ENCODE measurements at regions of chr17 and their contacts with region 1.

Region 1: GRCh38 chr17:2416010-2416734 is 15.3 kb upstream of the MNT start:
- DNase-seq: no peak
- ATAC-seq: peak; percentile 88
- H3K4me3 ChIP-seq: no peak overlapping the region
- H3K27ac ChIP-seq: 0 out of 2 replicates have a peak overlapping the region, but pooled peaks have one; percentile 6
- H3K4me1 ChIP-seq: peaks cover 0 to 13% of the 10 kb centered on the region in 2 experiments; a peak in 2 of 4 replicates
- H3K27me3 ChIP-seq: no peaks in the 10 kb centered on the region
- CTCF ChIP-seq: peak; percentile 89 to 97 (median 89)
- POLR2A ChIP-seq: no peak
- RAD21 ChIP-seq: peak; percentile 95

Region 2: GRCh38 chr17:2323629-2324314 is 92.4 kb before region 1 on chr17:
- CTCF ChIA-PET with region 1: no interaction called
- POLR2A ChIA-PET with region 1: no interaction called
- RAD21 ChIA-PET with region 1: no interaction called
- intact Hi-C with region 1: no loop called
- DNase-seq: no peak
- ATAC-seq: no peak
- H3K4me3 ChIP-seq: no peak overlapping the region
- H3K27ac ChIP-seq: no peak overlapping the region
- H3K4me1 ChIP-seq: no peaks in the 10 kb centered on the region
- H3K27me3 ChIP-seq: no peaks in the 10 kb centered on the region
- CTCF ChIP-seq: no peak
- POLR2A ChIP-seq: no peak
- RAD21 ChIP-seq: no peak

Region 3: GRCh38 chr17:2369551-2370210 is 46.5 kb before region 1 on chr17:
- CTCF ChIA-PET with region 1: interaction called, 12 read pairs
- POLR2A ChIA-PET with region 1: no interaction called
- RAD21 ChIA-PET with region 1: no interaction called
- intact Hi-C with region 1: no loop called
- DNase-seq: no peak
- ATAC-seq: peak; percentile 51
- H3K4me3 ChIP-seq: no peak overlapping the region
- H3K27ac ChIP-seq: no peak overlapping the region
- H3K4me1 ChIP-seq: no peaks in the 10 kb centered on the region
- H3K27me3 ChIP-seq: no peaks in the 10 kb centered on the region
- CTCF ChIP-seq: no peak; a peak in 1 of 6 replicates
- POLR2A ChIP-seq: no peak
- RAD21 ChIP-seq: no peak

Region 4: DNA sequence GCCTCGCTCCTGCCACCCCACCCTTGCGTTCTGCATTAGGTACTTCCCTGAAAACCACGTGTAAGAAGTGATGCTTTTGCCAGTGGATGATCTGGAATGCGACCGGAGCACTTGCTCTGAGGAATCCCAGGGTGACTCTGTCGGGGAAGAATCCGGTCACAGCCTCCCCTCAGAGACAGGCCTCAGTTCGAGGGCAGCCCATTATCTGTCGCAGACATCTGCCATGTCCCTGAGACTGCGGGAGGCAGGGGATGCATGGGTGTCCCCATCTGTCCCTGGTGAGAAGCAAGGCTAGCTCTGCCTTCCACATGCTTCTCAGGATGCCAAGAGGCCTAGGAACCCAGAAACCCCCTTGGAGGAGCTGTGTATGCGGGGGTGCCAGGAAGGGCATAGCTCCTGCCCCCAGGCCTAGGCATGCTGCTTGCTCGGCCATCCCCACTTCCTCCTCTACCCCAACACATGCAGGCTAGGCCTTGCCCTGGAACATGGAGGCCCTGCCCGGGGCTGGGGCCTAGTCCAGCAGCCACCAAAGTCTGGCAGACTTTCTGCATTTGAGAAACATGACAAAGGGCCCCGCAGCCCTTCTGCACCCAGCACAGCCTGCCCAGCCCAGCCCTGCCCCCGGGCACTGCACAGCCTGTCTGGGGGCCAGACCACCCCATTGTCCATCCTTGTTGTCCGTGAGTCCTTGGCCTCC is 35.8 kb before region 1 on chr17:
- CTCF ChIA-PET with region 1: interaction called, 351 read pairs
- POLR2A ChIA-PET with region 1: interaction called, 18 read pairs
- RAD21 ChIA-PET with region 1: interaction called, 33 to 40 read pairs
- intact Hi-C with region 1: loop called (anchors 1 kb)
- DNase-seq: no peak
- ATAC-seq: no peak
- H3K4me3 ChIP-seq: no peak overlapping the region
- H3K27ac ChIP-seq: no peak overlapping the region
- H3K4me1 ChIP-seq: peaks cover 0 to 8% of the 10 kb centered on the region in 2 experiments; a peak in 1 of 4 replicates
- H3K27me3 ChIP-seq: no peaks in the 10 kb centered on the region
- CTCF ChIP-seq: no peak
- POLR2A ChIP-seq: no peak
- RAD21 ChIP-seq: no peak

Region 5: DNA sequence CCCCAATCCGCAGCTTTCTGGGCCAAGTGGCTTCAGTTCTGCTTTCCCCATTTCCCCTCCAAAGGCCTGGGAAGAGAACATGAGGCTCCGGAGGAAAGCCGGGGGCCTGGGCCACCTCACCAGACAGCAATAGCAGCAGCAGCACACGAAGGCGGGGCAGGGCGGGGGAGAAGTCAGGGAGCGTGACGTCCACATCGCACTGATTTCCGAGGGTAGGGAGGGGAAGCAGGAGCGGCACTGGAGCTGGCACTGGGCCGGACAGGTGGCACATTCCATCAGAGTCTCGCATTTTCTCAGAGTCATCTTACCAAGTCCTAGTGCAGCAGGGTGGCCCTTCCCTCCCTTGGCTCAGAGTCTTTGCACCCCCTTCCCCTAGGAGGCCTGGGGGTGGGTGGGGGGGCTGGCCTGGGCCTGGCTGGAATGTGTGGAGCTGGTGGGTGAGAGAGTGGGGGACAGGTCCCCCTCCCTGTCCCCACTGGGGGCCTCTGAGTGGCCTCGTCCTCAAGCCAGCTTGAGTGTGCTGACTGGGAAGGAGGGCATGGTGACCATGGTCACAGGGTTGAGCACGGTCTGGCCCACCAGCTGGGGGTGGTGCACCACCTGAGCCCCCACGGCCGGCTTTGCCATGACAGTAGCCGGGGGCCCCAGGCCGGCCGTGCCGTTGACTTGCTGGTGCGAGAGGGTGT is 29.6 kb before region 1 on chr17:
- CTCF ChIA-PET with region 1: interaction called, 351 read pairs
- POLR2A ChIA-PET with region 1: interaction called, 18 read pairs
- RAD21 ChIA-PET with region 1: interaction called, 33 to 40 read pairs
- intact Hi-C with region 1: loop called (anchors 1 kb)
- DNase-seq: no peak
- ATAC-seq: no peak
- H3K4me3 ChIP-seq: no peak overlapping the region
- H3K27ac ChIP-seq: no peak overlapping the region
- H3K4me1 ChIP-seq: peaks cover 5 to 27% of the 10 kb centered on the region in 2 experiments
- H3K27me3 ChIP-seq: no peaks in the 10 kb centered on the region
- CTCF ChIP-seq: no peak
- POLR2A ChIP-seq: no peak
- RAD21 ChIP-seq: no peak

Region 6: GRCh38 chr17:2392252-2393173 is 23.7 kb before region 1 on chr17:
- CTCF ChIA-PET with region 1: interaction called, 14 read pairs
- POLR2A ChIA-PET with region 1: interaction called, 8 read pairs
- RAD21 ChIA-PET with region 1: interaction called in 1 of 2 experiments, 3 read pairs
- intact Hi-C with region 1: no loop called
- DNase-seq: peak; percentile 77
- ATAC-seq: peak; percentile 66
- H3K4me3 ChIP-seq: peak overlapping the region; percentile 63 to 69
- H3K27ac ChIP-seq: peak overlapping the region; percentile 100
- H3K4me1 ChIP-seq: peaks cover 38 to 75% of the 10 kb centered on the region in 2 experiments
- H3K27me3 ChIP-seq: no peaks in the 10 kb centered on the region
- CTCF ChIP-seq: no peak
- POLR2A ChIP-seq: peak; percentile 19
- RAD21 ChIP-seq: no peak

Region 7: DNA sequence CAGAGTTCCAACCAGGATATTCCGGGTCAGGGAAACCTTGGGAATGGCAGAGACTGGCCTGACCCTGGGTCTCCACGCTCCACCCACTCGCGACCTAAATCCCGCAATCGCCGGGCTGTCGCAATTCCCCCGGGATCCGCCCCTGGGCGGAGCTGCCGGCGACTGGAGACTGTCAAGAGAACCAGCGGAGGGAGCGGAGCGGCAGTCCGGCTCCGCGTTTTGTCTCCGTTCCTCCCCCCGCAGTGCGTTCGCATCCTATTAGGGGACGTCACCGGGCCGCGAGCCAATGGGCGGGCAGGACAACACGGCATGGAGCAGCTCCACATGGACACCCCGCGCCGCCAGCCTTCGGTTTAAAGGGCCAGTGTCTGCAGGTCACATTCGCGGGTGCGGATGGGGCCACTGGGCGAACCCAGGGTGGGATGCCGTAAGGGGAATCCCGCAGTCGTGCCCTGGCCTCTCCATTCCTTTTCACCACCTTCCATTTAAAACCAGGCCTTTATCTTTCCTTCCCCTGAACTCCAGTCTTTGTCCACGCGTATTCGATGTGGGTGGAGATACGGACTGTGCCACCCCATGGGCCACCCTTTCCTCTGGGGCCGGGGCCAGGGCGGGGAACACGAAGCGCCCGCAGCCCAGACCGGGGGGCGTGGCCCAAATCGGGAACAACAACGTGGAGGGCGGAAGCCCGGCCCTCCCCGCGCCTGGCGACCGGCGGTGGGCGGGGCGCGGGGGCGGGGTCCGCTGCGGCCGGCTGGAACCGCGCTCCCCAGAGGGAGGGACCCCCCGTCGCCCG is 14.5 kb before region 1 on chr17:
- CTCF ChIA-PET with region 1: interaction called, 34 read pairs
- POLR2A ChIA-PET with region 1: interaction called, 11 read pairs
- RAD21 ChIA-PET with region 1: interaction called in 1 of 2 experiments, 4 read pairs
- intact Hi-C with region 1: no loop called
- DNase-seq: peak; percentile 98
- ATAC-seq: peak; percentile 56
- H3K4me3 ChIP-seq: peak overlapping the region; percentile 48 to 96
- H3K27ac ChIP-seq: peak overlapping the region; percentile 97
- H3K4me1 ChIP-seq: peaks cover 49 to 83% of the 10 kb centered on the region in 2 experiments
- H3K27me3 ChIP-seq: no peaks in the 10 kb centered on the region
- CTCF ChIP-seq: no peak
- POLR2A ChIP-seq: no peak
- RAD21 ChIP-seq: no peak